ENCODE measurements at regions of chr11 and their contacts with region 1.

Region 1: GRCh38 chr11:36746886-36747710 is 149.1 kb upstream of the RAG2 start:
- DNase-seq: peak; percentile 70 to 79
- H3K4me3 ChIP-seq: no peak overlapping the region
- H3K27ac ChIP-seq: no peak overlapping the region
- H3K4me1 ChIP-seq: no peaks in the 10 kb centered on the region
- H3K27me3 ChIP-seq: peaks cover 15% of the 10 kb centered on the region
- CTCF ChIP-seq: peak; percentile 98

Region 2: GRCh38 chr11:36289226-36289852 is 457.8 kb before region 1 on chr11 and contains the start of gene COMMD9:
- CTCF ChIA-PET with region 1: no interaction called
- POLR2A ChIA-PET with region 1: no interaction called
- intact Hi-C with region 1: loop called (anchors 5 kb)
- DNase-seq: peak; percentile 92 to 94
- H3K4me3 ChIP-seq: peak within 1 kb of the TSS; percentile 63
- H3K27ac ChIP-seq: peak within 1 kb of the TSS; percentile 36; the same call in 1 of the 2 replicates
- H3K4me1 ChIP-seq: peaks cover 14% of the 10 kb centered on the region
- H3K27me3 ChIP-seq: no peaks in the 10 kb centered on the region
- CTCF ChIP-seq: no peak
- total RNA-seq, gene COMMD9: 56.5 and 77.5 TPM in 2 replicates

Region 3: GRCh38 chr11:36564376-36565030 is 182.6 kb before region 1 on chr11:
- CTCF ChIA-PET with region 1: interaction called, 11 read pairs
- POLR2A ChIA-PET with region 1: no interaction called
- intact Hi-C with region 1: loop called (anchors 1 kb)
- DNase-seq: peak in 1 of 2 experiments; percentile 24
- H3K4me3 ChIP-seq: no peak overlapping the region
- H3K27ac ChIP-seq: no peak overlapping the region
- H3K4me1 ChIP-seq: no peaks in the 10 kb centered on the region
- H3K27me3 ChIP-seq: no peaks in the 10 kb centered on the region
- CTCF ChIP-seq: peak; percentile 68

Region 4: DNA sequence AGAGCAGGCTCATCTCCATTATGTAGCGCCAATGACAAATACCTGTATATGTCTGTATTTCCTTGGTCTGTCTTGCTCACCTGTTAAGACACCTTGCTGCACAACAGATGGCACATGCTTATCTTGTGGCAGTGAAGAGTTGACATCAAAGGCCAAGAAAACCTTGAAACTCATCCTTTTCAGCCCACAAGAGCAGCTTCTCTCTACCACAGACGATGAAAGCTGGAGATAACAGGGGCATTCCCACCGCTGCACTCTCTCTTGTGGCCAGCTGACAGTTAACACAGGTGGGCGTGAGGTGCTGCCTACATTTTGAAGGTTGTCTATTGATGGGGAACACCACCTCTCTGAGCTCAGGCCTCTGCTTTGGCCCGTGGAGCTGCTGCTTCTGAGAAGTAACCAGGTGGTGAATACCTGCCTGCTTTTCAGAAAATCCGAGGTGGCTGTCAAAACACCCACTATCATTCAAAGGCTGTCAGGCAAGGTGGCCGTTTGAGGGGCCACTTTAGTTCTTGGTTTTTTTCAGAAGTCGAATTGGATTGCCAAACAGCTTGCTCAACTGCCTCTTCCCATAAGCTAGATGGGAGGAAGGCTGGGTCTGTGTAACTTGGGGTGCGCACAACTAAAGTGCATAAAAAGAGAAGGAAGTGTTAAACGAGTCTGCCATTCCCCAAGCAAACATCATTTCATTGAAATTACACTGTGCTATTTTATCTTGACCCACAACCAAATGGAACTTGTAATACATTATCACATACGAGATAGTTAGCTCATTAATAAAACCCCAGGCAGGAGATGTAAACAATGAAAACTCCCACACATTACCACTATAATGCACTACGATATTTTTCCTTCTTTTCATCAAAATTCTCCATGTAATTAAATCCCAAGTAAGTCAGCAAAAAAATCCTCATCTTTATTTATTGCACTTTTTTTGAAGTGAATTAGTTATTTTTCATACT is 62.0 kb before region 1 on chr11:
- CTCF ChIA-PET with region 1: no interaction called
- POLR2A ChIA-PET with region 1: no interaction called
- intact Hi-C with region 1: no loop called
- DNase-seq: no peak
- H3K4me3 ChIP-seq: no peak overlapping the region
- H3K27ac ChIP-seq: no peak overlapping the region
- H3K4me1 ChIP-seq: no peaks in the 10 kb centered on the region
- H3K27me3 ChIP-seq: peaks cover 91% of the 10 kb centered on the region
- CTCF ChIP-seq: no peak

Region 5: GRCh38 chr11:36702330-36703055 is 44.6 kb before region 1 on chr11:
- CTCF ChIA-PET with region 1: interaction called, 9 read pairs
- POLR2A ChIA-PET with region 1: no interaction called
- intact Hi-C with region 1: loop called (anchors 1 kb)
- DNase-seq: peak; percentile 10 to 46
- H3K4me3 ChIP-seq: no peak overlapping the region
- H3K27ac ChIP-seq: no peak overlapping the region
- H3K4me1 ChIP-seq: no peaks in the 10 kb centered on the region
- H3K27me3 ChIP-seq: peaks cover 37% of the 10 kb centered on the region
- CTCF ChIP-seq: peak; percentile 79

Region 6: DNA sequence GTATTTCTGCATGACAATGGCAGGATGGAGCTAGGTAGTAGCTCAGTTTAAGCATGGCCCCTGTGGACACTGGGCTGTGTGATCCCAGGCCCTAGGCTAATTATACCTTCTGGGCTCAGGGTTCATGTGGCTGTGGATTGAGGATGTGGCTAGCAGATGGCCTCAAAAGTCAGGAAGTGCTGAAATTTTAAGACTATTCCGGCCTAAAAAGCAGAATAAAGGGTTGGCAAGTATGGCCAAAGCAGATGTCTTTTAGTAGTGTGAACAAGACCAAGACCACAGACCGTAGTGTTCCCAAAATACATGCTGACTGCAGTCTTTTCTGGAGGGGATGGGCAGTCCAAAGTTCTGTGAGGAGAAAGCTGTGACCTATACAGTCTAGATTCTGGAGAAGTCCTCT is 33.4 kb before region 1 on chr11:
- CTCF ChIA-PET with region 1: no interaction called
- POLR2A ChIA-PET with region 1: no interaction called
- intact Hi-C with region 1: no loop called
- DNase-seq: no peak
- H3K4me3 ChIP-seq: no peak overlapping the region
- H3K27ac ChIP-seq: no peak overlapping the region
- H3K4me1 ChIP-seq: no peaks in the 10 kb centered on the region
- H3K27me3 ChIP-seq: peaks cover 78% of the 10 kb centered on the region
- CTCF ChIP-seq: no peak

Measured in PC-9 (cell line).